Ascending aorta (tissue), 2 donors: ENCODE measurements at regions of chr4 and their contacts with region 1.

Region 1: DNA sequence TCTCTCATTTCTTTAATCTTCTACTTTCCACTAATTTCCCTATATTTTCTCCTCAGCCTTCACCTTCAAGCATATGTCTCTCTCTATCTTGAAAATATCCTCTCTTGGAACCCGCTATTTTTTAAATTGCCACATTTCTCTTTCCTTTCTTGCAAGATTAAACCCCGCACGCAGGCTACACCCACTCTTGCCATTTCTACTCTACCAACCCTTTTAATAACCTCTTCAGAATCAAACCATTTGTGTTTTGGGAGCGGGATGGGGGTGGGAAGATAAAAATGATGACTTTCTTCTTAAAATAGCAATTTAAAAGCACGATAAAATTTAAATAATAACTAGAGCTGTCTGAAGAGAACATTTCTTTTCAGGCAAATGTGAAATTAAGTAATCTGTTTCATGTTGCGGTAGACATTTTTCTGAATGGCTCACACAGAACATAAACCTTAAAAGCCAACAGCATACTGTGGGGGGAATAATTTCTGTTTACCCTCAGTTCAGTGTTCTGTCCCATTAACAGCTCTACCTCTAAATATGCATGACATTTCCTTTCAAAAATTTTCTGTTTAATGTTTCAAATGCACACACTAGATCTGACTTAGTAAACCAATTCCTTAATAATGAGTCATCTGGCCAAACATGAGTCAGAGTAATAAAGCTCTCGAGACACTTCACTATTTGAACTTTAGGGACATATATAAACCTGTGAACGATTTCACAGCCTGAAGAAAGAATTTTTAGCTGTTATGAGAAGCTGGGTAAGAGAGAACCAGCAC is 20.5 kb downstream of the ARSJ start:
- DNase-seq: no peak
- H3K4me3 ChIP-seq: peak overlapping the region in 1 of 2 donors; percentile 46
- H3K27ac ChIP-seq: peak overlapping the region; percentile 63 to 77
- H3K4me1 ChIP-seq: peaks cover 0 to 18% of the 10 kb centered on the region in 2 donors
- H3K27me3 ChIP-seq: no peaks in the 10 kb centered on the region
- CTCF ChIP-seq: no peak

Region 2: GRCh38 chr4:113781439-113782040 is 177.4 kb before region 1 on chr4:
- intact Hi-C with region 1: no loop called
- DNase-seq: no peak
- H3K4me3 ChIP-seq: no peak overlapping the region
- H3K27ac ChIP-seq: no peak overlapping the region
- H3K4me1 ChIP-seq: peaks cover 4% of the 10 kb centered on the region in 2 donors
- H3K27me3 ChIP-seq: no peaks in the 10 kb centered on the region
- CTCF ChIP-seq: peak; percentile 28 to 65 (median 59)

Region 3: GRCh38 chr4:114281164-114281960 is 322.4 kb after region 1 on chr4:
- intact Hi-C with region 1: loop called (anchors 5 kb)
- DNase-seq: no peak
- H3K4me3 ChIP-seq: no peak overlapping the region
- H3K27ac ChIP-seq: peak overlapping the region; percentile 54 to 65
- H3K4me1 ChIP-seq: peaks cover 0 to 12% of the 10 kb centered on the region in 2 donors
- H3K27me3 ChIP-seq: no peaks in the 10 kb centered on the region
- CTCF ChIP-seq: no peak